ENCODE measurements at regions of chr7 and their contacts with region 1.

Region 1: GRCh38 chr7:37234928-37235327 is 213.7 kb downstream of the ELMO1 start:
- DNase-seq: no peak
- H3K4me3 ChIP-seq: no peak overlapping the region
- H3K27ac ChIP-seq: no peak overlapping the region
- H3K4me1 ChIP-seq: no peaks in the 10 kb centered on the region
- H3K27me3 ChIP-seq: no peaks in the 10 kb centered on the region
- CTCF ChIP-seq: peak in 3 of 4 experiments; percentile 28 to 52 (median 41)
- POLR2A ChIP-seq: no peak

Region 2: GRCh38 chr7:37448636-37449361 is 213.9 kb after region 1 on chr7 and contains the start of gene ELMO1:
- intact Hi-C with region 1: loop called (anchors 10 kb)
- DNase-seq: peak; percentile 45
- H3K4me3 ChIP-seq: peak within 1 kb of the TSS; percentile 66 to 75
- H3K27ac ChIP-seq: peak within 1 kb of the TSS; percentile 65 to 77
- H3K4me1 ChIP-seq: no peaks in the 10 kb centered on the region
- H3K27me3 ChIP-seq: no peaks in the 10 kb centered on the region
- CTCF ChIP-seq: peak in 2 of 4 experiments; percentile 41 to 46
- POLR2A ChIP-seq: no peak
- total RNA-seq, gene ELMO1: 6.7 to 19.3 TPM